H1 (cell line): ENCODE measurements at regions of chr7 and their contacts with region 1.

Region 1: GRCh38 chr7:8277394-8277982 is 15.5 kb upstream of the ICA1 start:
- DNase-seq: no peak
- H3K4me3 ChIP-seq: no peak overlapping the region
- H3K27ac ChIP-seq: no peak overlapping the region
- H3K4me1 ChIP-seq: no peaks in the 10 kb centered on the region
- H3K27me3 ChIP-seq: no peaks in the 10 kb centered on the region
- CTCF ChIP-seq: peak in 2 of 3 experiments; percentile 67 to 71; a peak in 3 of 4 replicates
- EP300 ChIP-seq: no peak
- POLR2A ChIP-seq: no peak
- RAD21 ChIP-seq: peak; percentile 87 to 90

Region 2: DNA sequence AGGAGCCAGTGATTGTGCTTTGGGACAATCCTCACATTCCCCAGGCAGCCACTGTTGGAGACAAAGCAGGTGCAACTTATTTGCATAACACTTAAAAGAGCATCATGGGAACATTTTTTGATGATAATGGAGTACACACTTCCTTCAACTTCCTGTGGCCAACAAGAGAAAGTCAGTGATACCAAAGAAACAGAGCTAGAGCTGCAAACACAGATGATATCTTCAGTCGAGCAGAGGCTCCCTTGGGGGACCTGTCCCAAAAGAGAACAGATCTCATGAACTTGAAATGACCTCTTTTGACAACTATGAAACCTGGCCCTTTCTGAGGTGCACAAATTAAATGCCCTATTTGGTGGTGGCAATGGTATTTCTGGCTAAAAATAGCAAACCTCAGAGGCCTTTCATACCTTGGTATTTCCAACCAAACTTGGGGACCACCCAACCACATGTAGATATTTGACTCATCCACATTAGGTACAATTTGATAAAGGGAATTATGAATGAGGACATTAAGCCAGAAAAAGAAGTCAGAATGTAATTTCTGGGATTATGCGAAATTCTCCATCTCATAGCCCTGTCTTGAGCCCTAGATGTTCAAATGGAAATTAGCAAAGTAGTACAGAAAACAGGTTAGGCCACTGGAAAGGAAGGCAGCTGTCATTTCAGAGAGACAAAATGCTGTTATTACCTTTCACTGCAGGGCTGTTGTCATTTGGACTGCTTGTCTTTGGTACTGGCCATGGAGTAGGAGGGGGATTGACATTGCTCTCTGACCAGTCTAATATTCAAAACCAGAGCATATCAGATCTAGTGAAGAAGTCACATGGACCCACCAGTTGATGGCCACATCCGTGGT is 161.7 kb before region 1 on chr7:
- CTCF ChIA-PET with region 1: no interaction called
- POLR2A ChIA-PET with region 1: no interaction called
- DNase-seq: no peak
- H3K4me3 ChIP-seq: no peak overlapping the region
- H3K27ac ChIP-seq: no peak overlapping the region
- H3K4me1 ChIP-seq: peaks cover 3 to 15% (median 9%) of the 10 kb centered on the region in 4 experiments; a peak in 5 of 7 replicates
- H3K27me3 ChIP-seq: no peaks in the 10 kb centered on the region
- CTCF ChIP-seq: no peak
- EP300 ChIP-seq: no peak
- POLR2A ChIP-seq: no peak
- RAD21 ChIP-seq: no peak

Region 3: GRCh38 chr7:8261711-8262695 is 15.5 kb before region 1 on chr7 and contains the start of gene ICA1:
- CTCF ChIA-PET with region 1: interaction called, 18 read pairs
- POLR2A ChIA-PET with region 1: interaction called, 5 read pairs
- DNase-seq: peak in 1 of 2 experiments; percentile 89
- H3K4me3 ChIP-seq: peak within 1 kb of the TSS; percentile 70 to 82 (median 76)
- H3K27ac ChIP-seq: peak within 1 kb of the TSS; percentile 77; the same call in 1 of the 2 replicates
- H3K4me1 ChIP-seq: peaks cover 0 to 6% (median 0%) of the 10 kb centered on the region in 4 experiments; a peak in 2 of 7 replicates
- H3K27me3 ChIP-seq: 0 out of 7 replicates have a peak, but pooled peaks cover 0 to 3% (median 1%) of the 10 kb centered on the region in 4 experiments
- CTCF ChIP-seq: no peak
- EP300 ChIP-seq: peak; percentile 18 to 23; a peak in 2 of 3 replicates
- POLR2A ChIP-seq: peak; percentile 67 to 80
- RAD21 ChIP-seq: no peak
- total RNA-seq, gene ICA1: 36.9 and 37.1 TPM in 2 replicates

Region 4: DNA sequence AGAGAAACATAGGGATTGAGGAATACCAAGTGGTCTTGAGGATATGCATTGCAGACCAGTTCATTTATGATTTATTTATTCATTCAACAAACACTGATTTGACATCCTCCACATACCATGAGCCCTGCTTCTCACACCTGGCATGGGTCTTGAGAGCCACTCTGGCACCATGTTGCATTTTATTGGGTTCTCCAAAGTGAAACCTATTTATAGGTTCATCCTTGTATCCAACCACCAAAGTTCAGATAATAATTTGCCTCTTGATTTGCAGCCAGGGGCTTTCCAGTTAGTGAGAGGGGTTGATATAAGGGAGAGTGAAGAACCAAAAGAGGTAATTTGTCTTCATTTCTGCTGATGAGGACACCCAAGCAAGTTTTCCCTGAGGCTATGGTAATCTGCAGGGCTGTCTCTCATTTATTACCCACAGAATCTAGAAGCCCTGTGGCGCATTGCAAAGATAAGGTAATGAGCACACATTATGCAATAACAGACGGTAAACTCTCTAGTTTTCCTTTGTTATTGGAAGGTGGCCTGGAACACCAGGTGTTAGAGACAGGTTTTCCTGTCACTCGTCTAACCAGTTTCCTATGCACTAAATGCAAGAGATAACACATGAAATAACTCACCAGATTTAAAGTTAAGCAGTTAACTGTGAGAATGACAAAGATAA is 13.3 kb after region 1 on chr7:
- CTCF ChIA-PET with region 1: interaction called, 40 read pairs
- POLR2A ChIA-PET with region 1: interaction called, 3 read pairs
- DNase-seq: no peak
- H3K4me3 ChIP-seq: no peak overlapping the region
- H3K27ac ChIP-seq: no peak overlapping the region
- H3K4me1 ChIP-seq: no peaks in the 10 kb centered on the region; a peak in 1 of 7 replicates
- H3K27me3 ChIP-seq: no peaks in the 10 kb centered on the region
- CTCF ChIP-seq: no peak
- EP300 ChIP-seq: no peak
- POLR2A ChIP-seq: no peak
- RAD21 ChIP-seq: no peak

Region 5: DNA sequence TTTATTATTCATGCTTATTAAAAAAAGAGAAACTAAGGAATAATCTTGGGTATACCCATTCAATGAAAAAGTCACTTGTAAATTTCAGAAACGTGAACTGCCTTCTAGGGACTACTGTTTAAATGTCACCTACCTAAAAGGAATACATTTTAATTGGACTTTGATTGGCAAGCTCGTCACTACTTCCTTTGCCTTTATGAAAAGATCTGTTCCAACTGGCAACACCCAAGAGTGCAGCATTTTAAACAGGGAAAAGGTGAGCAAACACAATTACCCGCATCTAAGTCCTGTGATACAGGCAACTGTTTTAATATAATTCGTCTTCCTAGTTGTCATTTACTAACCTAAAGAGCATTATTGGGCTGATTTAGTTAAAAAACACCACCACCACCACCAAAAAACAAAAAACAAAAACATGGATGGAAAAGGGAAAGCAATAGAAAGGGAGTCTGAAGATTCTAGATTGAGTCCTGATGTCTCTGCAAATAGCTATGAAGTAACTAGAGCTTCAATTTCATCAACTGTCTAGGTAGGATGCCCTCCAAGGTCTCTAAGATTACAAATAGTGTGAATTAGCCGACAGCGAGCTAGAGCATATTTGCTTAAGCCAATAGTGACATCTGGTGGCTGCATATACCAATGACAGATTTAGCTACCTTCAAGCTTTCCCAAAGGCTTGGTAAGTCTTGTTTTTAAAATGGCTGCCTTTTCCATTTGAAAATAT is 18.3 kb after region 1 on chr7:
- CTCF ChIA-PET with region 1: interaction called, 40 read pairs
- POLR2A ChIA-PET with region 1: interaction called, 3 read pairs
- DNase-seq: peak in 1 of 2 experiments; percentile 17
- H3K4me3 ChIP-seq: no peak overlapping the region
- H3K27ac ChIP-seq: no peak overlapping the region
- H3K4me1 ChIP-seq: no peaks in the 10 kb centered on the region
- H3K27me3 ChIP-seq: no peaks in the 10 kb centered on the region
- CTCF ChIP-seq: peak in 2 of 3 experiments; percentile 71 to 81; a peak in 3 of 4 replicates
- EP300 ChIP-seq: no peak
- POLR2A ChIP-seq: no peak
- RAD21 ChIP-seq: peak; percentile 96 to 99

Region 6: DNA sequence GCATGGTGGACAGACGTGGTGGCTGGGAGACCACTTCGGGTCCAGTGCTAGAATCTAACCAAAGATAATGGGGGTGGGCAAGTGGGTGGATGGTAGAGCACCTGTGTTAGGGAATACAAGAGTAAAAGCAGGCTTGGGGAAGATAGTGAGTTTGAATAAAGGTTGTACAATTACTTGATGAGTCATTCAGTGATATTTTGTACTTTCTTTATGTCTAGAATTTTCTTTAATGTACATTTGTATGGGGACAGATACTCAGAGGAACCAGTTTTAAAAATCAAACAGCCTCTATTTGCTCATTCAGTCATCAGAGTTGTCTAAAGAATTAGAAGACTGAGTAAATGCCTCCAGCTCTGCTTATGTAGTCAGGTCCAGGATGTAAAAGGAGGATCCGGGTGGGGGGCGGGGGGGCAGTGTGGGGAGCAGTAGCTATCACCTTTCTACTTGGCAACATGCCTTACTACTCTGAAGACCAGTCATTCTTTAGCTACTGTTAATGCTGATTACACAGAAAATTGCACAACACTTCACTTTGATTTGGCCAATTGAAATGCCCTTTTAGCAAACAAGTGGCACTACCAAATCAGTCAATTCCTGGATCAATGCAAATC is 319.9 kb after region 1 on chr7:
- CTCF ChIA-PET with region 1: no interaction called
- POLR2A ChIA-PET with region 1: no interaction called
- DNase-seq: no peak
- H3K4me3 ChIP-seq: no peak overlapping the region
- H3K27ac ChIP-seq: no peak overlapping the region
- H3K4me1 ChIP-seq: no peaks in the 10 kb centered on the region
- H3K27me3 ChIP-seq: no peaks in the 10 kb centered on the region
- CTCF ChIP-seq: no peak
- EP300 ChIP-seq: no peak
- POLR2A ChIP-seq: no peak
- RAD21 ChIP-seq: no peak